ENCODE measurements at regions of chr1 and their contacts with region 1.

Region 1: GRCh38 chr1:162206749-162207635 is 137.5 kb downstream of the NOS1AP start:
- DNase-seq: peak; percentile 28 to 60 (median 58)
- ATAC-seq: peak; percentile 64 to 82 (median 74)
- H3K4me3 ChIP-seq: peak overlapping the region in 1 of 3 donors; percentile 9
- H3K27ac ChIP-seq: peak overlapping the region in 2 of 3 donors; percentile 55 to 63
- H3K4me1 ChIP-seq: peaks cover 0 to 62% (median 14%) of the 10 kb centered on the region in 4 donors
- H3K27me3 ChIP-seq: no peaks in the 10 kb centered on the region
- CTCF ChIP-seq: no peak
- POLR2A ChIP-seq: no peak

Region 2: DNA sequence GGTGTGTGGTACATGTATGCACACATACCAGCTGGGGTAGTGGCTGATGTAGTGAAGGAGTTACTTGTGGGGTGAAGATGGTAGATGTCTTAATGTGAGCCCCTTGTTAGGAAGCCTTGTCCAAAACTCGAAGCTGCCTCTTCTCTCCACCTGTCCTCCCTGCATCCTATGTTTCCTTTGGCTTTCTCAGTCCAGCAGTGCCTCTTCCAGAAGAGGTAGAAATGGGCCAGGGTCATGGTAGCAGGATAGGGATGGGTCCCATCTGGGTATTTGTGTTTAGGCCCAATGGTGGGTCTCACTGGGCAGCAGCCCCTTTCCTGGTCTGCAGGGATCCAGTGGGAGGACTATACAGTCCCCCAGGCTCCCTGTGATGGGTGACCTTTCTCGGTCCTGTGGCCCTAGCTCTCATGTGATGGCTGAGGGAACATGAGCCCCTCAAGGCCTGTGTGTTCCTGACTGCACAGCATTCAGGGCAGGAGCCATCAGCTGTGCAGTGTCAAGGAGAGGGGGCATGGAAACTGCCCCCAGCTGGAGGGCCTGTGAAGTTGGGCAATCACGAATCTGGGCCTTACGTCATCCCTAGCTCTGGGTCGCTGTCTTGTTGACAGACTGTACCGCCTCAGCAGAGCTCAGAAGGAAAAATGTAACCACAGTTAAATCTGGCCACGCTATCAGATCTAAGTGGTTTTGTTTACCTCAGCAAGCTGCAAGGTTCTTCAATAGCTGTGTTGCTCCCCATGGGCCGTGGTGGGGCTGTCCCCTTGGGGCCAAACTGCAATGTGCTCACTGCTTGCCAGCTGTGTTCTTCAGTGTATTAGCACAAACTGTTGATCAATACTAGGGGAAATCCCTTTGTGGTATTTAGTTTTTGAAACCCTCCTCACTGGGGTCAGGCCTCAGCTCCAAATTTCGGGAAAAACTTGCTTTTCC is 54.8 kb before region 1 on chr1:
- intact Hi-C with region 1: loop called in 1 of 2 experiments (anchors 10 kb)
- DNase-seq: peak; percentile 83 to 88 (median 88)
- ATAC-seq: peak; percentile 88 to 98 (median 96)
- H3K4me3 ChIP-seq: no peak overlapping the region
- H3K27ac ChIP-seq: peak overlapping the region; percentile 36 to 93 (median 85)
- H3K4me1 ChIP-seq: peaks cover 0 to 25% (median 5%) of the 10 kb centered on the region in 4 donors
- H3K27me3 ChIP-seq: no peaks in the 10 kb centered on the region
- CTCF ChIP-seq: no peak
- POLR2A ChIP-seq: no peak

Measured in right lobe of liver (tissue), 6 donors.